ENCODE measurements at regions of chr7 and their contacts with region 1.

Region 1: DNA sequence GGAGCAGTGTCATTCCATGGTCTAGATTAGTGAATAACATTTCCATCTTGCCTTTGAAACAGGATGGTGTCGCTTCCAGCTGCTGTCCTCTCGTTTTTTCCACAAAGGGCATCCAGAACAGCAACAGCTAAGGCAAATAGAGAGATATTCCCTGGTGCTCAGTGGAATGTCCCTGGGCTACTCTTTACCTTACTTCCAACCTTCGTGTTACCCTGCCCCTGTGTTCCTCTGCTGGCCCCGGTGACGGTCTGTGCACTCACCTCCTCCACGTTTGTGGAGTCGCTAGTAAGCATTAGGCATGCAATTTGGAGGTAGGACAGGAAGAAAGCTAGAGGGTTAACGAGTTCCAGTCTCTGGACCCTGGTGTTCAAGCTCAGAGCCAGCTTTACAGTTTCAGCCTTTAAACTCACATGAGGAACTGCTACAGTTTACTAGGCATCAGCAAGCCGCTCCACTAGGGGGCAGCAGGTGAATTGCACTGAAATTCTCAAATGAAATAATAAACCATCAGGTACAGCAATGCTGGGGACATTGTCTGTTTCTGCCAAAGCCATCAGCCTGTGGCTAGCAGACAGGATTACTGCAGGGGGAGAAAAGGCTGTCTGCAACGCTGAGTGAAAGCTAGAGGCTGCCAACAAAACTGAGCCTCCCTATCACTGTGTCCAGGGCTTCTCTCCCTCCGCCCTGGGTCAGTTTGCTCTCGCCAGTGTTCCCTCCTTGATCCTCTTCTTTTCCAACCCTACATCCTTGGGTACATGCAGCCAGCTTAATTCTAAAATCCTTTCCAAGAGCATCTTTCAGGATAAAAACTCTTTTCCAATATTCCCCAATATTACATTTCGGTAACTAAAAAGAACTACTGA is 9.0 kb downstream of the MRPL32 start:
- DNase-seq: peak; percentile 60
- H3K4me3 Mint-ChIP-seq: no peak overlapping the region
- H3K27ac Mint-ChIP-seq: no peak overlapping the region
- H3K4me1 Mint-ChIP-seq: peaks cover 26% of the 10 kb centered on the region
- H3K27me3 Mint-ChIP-seq: no peaks in the 10 kb centered on the region

Region 2: DNA sequence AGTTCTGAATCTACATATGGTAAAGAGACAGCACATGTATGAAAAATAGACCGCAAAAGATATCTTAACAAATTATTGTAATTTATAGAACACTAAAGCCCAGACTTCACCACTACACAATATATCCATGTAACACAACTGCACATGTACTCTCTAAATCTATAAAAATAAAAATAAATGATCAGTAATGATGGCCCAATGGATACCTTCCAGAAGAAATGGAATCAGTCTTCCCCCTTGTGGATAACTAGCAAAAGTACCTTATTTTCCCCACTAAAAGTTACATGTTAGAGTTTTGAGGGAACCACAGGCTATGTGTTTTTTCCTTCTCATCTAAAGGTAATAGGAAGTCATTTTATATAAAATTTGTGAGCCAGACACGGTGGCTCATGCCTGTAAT is 55.1 kb before region 1 on chr7:
- intact Hi-C with region 1: no loop called
- DNase-seq: no peak
- H3K4me3 Mint-ChIP-seq: no peak overlapping the region
- H3K27ac Mint-ChIP-seq: no peak overlapping the region
- H3K4me1 Mint-ChIP-seq: peaks cover 25% of the 10 kb centered on the region
- H3K27me3 Mint-ChIP-seq: peaks cover 7% of the 10 kb centered on the region

Region 3: DNA sequence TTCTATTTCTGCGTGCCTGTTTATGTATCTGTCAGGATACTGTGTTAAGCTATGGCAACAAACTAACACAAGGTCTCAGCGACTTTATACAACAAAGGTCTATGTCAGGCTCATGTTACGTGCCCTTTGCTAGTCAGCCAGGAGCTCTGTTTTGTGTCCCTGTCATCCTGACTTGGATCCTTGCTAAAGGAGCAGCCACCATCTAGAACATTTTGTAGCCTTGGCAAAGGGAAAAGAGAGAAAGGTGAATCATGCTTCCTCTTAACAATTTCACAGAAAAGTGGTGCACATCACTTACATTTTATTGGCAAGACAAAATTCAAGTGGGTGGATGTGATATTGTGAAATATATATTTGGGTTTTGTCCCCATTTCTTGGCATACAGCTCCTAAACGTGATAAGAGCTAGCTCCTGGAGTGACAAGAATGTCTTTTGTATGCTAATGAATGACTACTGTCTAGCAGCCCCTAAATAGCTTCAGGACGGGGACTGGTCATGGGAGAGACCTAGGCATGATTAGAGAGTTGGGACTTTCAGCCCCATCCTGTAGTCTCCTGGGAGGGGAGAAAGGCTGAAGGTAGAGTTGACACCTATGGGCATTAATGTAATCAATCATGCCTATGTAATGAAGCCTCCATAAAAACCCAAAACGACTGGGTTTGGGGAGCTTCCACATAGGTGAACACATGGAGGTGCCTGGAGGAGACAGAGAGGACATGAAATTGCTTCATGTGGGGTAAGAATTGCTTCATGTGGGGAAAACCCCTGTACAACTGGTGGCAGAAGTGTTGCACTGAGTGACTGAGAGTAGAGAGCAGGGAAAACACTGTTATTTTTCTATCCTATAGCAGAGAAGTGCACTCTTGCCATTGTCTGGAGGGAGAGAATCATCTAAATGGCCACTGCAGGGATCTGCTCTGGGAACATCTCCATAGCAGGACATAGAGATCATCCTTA is 23.9 kb after region 1 on chr7:
- intact Hi-C with region 1: loop called (anchors 2 kb)
- DNase-seq: no peak
- H3K4me3 Mint-ChIP-seq: no peak overlapping the region
- H3K27ac Mint-ChIP-seq: peak overlapping the region; percentile 16
- H3K4me1 Mint-ChIP-seq: peaks cover 12% of the 10 kb centered on the region
- H3K27me3 Mint-ChIP-seq: no peaks in the 10 kb centered on the region

Region 4: GRCh38 chr7:43108255-43109011 is 167.2 kb after region 1 on chr7:
- intact Hi-C with region 1: loop called (anchors 1 kb)
- DNase-seq: peak; percentile 24
- H3K4me3 Mint-ChIP-seq: no peak overlapping the region
- H3K27ac Mint-ChIP-seq: no peak overlapping the region
- H3K4me1 Mint-ChIP-seq: peaks cover 7% of the 10 kb centered on the region
- H3K27me3 Mint-ChIP-seq: peaks cover 49% of the 10 kb centered on the region

Region 5: GRCh38 chr7:43170571-43170970 is 229.4 kb after region 1 on chr7:
- intact Hi-C with region 1: loop called (anchors 5 kb)
- DNase-seq: no peak
- H3K4me3 Mint-ChIP-seq: no peak overlapping the region
- H3K27ac Mint-ChIP-seq: no peak overlapping the region
- H3K4me1 Mint-ChIP-seq: no peaks in the 10 kb centered on the region
- H3K27me3 Mint-ChIP-seq: peaks cover 2% of the 10 kb centered on the region

Region 6: GRCh38 chr7:43260980-43261878 is 320.0 kb after region 1 on chr7:
- intact Hi-C with region 1: loop called (anchors 1 kb)
- DNase-seq: peak; percentile 52
- H3K4me3 Mint-ChIP-seq: no peak overlapping the region
- H3K27ac Mint-ChIP-seq: no peak overlapping the region
- H3K4me1 Mint-ChIP-seq: no peaks in the 10 kb centered on the region
- H3K27me3 Mint-ChIP-seq: peaks cover 10% of the 10 kb centered on the region

Region 7: GRCh38 chr7:43439631-43440401 is 498.6 kb after region 1 on chr7:
- intact Hi-C with region 1: loop called (anchors 1 kb)
- DNase-seq: peak; percentile 28
- H3K4me3 Mint-ChIP-seq: no peak overlapping the region
- H3K27ac Mint-ChIP-seq: no peak overlapping the region
- H3K4me1 Mint-ChIP-seq: no peaks in the 10 kb centered on the region
- H3K27me3 Mint-ChIP-seq: peaks cover 3% of the 10 kb centered on the region